Tibial artery (tissue), 4 donors: ENCODE measurements at regions of chr14 and their contacts with region 1.

Region 1: DNA sequence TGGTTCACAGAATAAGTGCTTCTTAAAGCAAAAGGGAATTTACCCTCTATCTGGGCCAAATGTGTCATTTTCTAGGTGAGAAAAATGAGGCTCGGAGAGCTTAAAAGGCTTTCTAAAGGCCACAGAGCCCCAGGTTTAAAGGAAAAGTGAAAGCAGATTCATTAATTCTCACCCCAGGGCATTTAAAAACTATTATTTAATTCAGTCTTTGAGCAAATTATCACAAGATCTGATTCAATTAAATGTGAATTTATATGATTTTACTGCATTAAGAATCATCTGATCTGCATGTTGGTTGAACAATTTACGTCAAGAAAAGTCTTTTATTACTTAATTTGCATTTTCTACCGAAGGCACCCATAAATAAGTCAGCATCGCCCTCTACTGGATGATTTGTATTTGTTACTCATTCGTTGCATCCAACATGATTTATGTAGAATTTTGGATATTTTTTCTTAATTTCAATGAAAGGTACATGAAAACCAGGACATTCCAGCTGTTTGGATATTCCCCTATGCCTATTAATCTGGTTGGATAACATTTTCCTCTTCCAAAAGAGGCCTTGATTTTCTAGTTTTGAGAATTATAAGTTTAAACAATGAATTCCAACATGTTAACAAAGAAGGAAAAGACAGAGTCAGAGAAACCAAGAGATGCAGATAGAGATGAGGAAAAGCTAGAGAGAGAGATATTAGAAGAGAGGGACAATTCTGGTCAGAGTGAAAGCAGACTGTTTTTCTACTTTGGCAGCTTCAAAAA is 19.1 kb upstream of the DHRS7 start:
- DNase-seq: no peak
- H3K4me3 ChIP-seq: peak overlapping the region; percentile 38 to 44
- H3K27ac ChIP-seq: no peak overlapping the region
- H3K4me1 ChIP-seq: peaks cover 0 to 11% (median 2%) of the 10 kb centered on the region in 4 donors
- H3K27me3 ChIP-seq: no peaks in the 10 kb centered on the region
- CTCF ChIP-seq: peak; percentile 77 to 90

Region 2: GRCh38 chr14:59964251-59965007 is 219.9 kb before region 1 on chr14:
- intact Hi-C with region 1: loop called (anchors 2 kb)
- DNase-seq: no peak
- H3K4me3 ChIP-seq: no peak overlapping the region
- H3K27ac ChIP-seq: no peak overlapping the region
- H3K4me1 ChIP-seq: no peaks in the 10 kb centered on the region
- H3K27me3 ChIP-seq: no peaks in the 10 kb centered on the region
- CTCF ChIP-seq: no peak

Region 3: GRCh38 chr14:60064491-60065072 is 119.7 kb before region 1 on chr14:
- intact Hi-C with region 1: loop called (anchors 2 kb)
- DNase-seq: no peak
- H3K4me3 ChIP-seq: no peak overlapping the region
- H3K27ac ChIP-seq: no peak overlapping the region
- H3K4me1 ChIP-seq: no peaks in the 10 kb centered on the region
- H3K27me3 ChIP-seq: no peaks in the 10 kb centered on the region
- CTCF ChIP-seq: peak; percentile 61 to 74